ENCODE measurements at regions of chr11 and their contacts with region 1.

Region 1: GRCh38 chr11:14519917-14520746 is at the start of gene PSMA1:
- DNase-seq: peak; percentile 74 to 95 (median 90)
- ATAC-seq: peak; percentile 90
- H3K4me3 ChIP-seq: peak within 1 kb of the TSS; percentile 82 to 84
- H3K4me3 Mint-ChIP-seq: peak within 1 kb of the TSS; percentile 98
- H3K27ac ChIP-seq: peak within 1 kb of the TSS; percentile 82 to 87
- H3K27ac Mint-ChIP-seq: peak within 1 kb of the TSS; percentile 97
- H3K4me1 ChIP-seq: peaks cover 19% of the 10 kb centered on the region
- H3K4me1 Mint-ChIP-seq: peaks cover 32% of the 10 kb centered on the region
- H3K27me3 ChIP-seq: no peaks in the 10 kb centered on the region
- H3K27me3 Mint-ChIP-seq: no peaks in the 10 kb centered on the region
- CTCF ChIP-seq: no peak
- total RNA-seq, gene PSMA1: 177 to 193 TPM

Region 2: DNA sequence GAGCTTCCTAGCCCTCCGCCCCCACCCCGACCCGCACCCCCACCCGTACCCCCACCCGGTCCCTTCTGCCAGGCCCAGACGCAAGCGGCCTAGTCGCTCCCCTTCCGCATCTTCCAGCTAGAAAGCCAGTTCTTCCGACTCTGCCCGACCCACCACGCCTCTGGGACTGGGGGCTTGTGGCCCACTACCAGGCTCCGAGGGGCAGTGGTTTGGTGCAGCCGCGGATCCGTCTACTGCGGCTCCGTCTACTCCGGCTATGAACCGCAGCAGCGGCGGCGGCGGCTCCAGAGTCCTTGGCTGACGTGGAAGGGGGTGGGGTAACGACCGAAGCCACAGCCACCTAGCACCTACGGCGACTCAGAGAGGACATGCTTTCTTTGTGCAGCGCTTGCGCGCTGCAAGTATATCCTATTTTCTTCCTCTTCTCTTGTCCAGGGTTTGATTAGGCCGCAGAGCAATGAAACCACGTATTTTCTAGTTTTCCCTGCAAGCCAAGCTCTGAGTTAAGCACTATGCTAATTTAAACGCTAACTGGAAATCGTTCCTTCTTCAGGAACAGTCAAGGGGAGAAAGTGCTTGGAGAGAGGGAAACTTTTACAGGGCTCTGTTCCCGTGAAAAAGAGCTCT is 20.5 kb before region 1 on chr11 and contains the start of gene COPB1:
- CTCF ChIA-PET with region 1: interaction called, 4 read pairs
- POLR2A ChIA-PET with region 1: interaction called, 8 read pairs
- intact Hi-C with region 1: loop called (anchors 1 kb)
- DNase-seq: peak; percentile 84 to 96 (median 92)
- ATAC-seq: peak; percentile 94
- H3K4me3 ChIP-seq: peak within 1 kb of the TSS; percentile 74 to 75
- H3K4me3 Mint-ChIP-seq: peak within 1 kb of the TSS; percentile 99
- H3K27ac ChIP-seq: peak within 1 kb of the TSS; percentile 65 to 82
- H3K27ac Mint-ChIP-seq: peak within 1 kb of the TSS; percentile 100
- H3K4me1 ChIP-seq: peaks cover 30% of the 10 kb centered on the region
- H3K4me1 Mint-ChIP-seq: peaks cover 51% of the 10 kb centered on the region
- H3K27me3 ChIP-seq: no peaks in the 10 kb centered on the region
- H3K27me3 Mint-ChIP-seq: no peaks in the 10 kb centered on the region
- CTCF ChIP-seq: no peak
- total RNA-seq, gene COPB1: 108 to 114 TPM

Region 3: DNA sequence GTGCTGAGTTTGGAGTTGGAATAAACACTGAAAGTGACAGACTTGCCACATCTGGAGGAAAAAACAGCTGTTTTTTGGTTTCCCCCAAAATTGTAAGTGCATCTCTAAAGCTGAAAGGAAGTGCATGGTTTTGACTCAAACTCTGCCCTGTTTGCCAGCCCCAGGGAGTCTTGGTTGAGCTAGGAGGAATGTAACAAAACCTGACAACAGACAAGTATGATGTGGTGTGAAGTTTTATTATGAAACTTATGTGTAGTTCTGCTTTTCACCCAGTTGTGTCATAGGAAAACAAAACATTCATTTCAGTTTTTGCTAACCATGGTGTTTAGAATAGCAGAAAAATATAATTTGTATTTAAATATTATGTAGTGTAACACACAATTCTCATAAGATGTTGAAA is 91.8 kb after region 1 on chr11:
- CTCF ChIA-PET with region 1: no interaction called
- POLR2A ChIA-PET with region 1: no interaction called
- intact Hi-C with region 1: no loop called
- DNase-seq: no peak
- ATAC-seq: no peak
- H3K4me3 ChIP-seq: no peak overlapping the region
- H3K4me3 Mint-ChIP-seq: no peak overlapping the region
- H3K27ac ChIP-seq: peak overlapping the region; percentile 4 to 12
- H3K27ac Mint-ChIP-seq: peak overlapping the region; percentile 74
- H3K4me1 ChIP-seq: peaks cover 6% of the 10 kb centered on the region
- H3K4me1 Mint-ChIP-seq: peaks cover 53% of the 10 kb centered on the region
- H3K27me3 ChIP-seq: no peaks in the 10 kb centered on the region
- H3K27me3 Mint-ChIP-seq: no peaks in the 10 kb centered on the region
- CTCF ChIP-seq: no peak

Region 4: GRCh38 chr11:14773755-14774154 is 253.6 kb after region 1 on chr11:
- CTCF ChIA-PET with region 1: no interaction called
- POLR2A ChIA-PET with region 1: no interaction called
- intact Hi-C with region 1: loop called in 1 of 2 experiments (anchors 5 kb)
- DNase-seq: peak in 2 of 9 experiments; percentile 45 to 65
- ATAC-seq: no peak
- H3K4me3 ChIP-seq: no peak overlapping the region
- H3K4me3 Mint-ChIP-seq: peak overlapping the region; percentile 9
- H3K27ac ChIP-seq: no peak overlapping the region
- H3K27ac Mint-ChIP-seq: peak overlapping the region; percentile 49
- H3K4me1 ChIP-seq: peaks cover 63% of the 10 kb centered on the region
- H3K4me1 Mint-ChIP-seq: peaks cover 71% of the 10 kb centered on the region
- H3K27me3 ChIP-seq: no peaks in the 10 kb centered on the region
- H3K27me3 Mint-ChIP-seq: no peaks in the 10 kb centered on the region
- CTCF ChIP-seq: peak; percentile 48

Region 5: GRCh38 chr11:14892036-14892567 is 372.0 kb after region 1 on chr11 and contains the start of gene CYP2R1:
- CTCF ChIA-PET with region 1: no interaction called
- POLR2A ChIA-PET with region 1: interaction called, 6 read pairs
- intact Hi-C with region 1: loop called (anchors 1 kb)
- DNase-seq: peak; percentile 81 to 95 (median 89)
- ATAC-seq: peak; percentile 74
- H3K4me3 ChIP-seq: peak within 1 kb of the TSS; percentile 68 to 75
- H3K4me3 Mint-ChIP-seq: peak within 1 kb of the TSS; percentile 88
- H3K27ac ChIP-seq: peak within 1 kb of the TSS; percentile 49 to 79
- H3K27ac Mint-ChIP-seq: peak within 1 kb of the TSS; percentile 93
- H3K4me1 ChIP-seq: peaks cover 10% of the 10 kb centered on the region
- H3K4me1 Mint-ChIP-seq: peaks cover 42% of the 10 kb centered on the region
- H3K27me3 ChIP-seq: no peaks in the 10 kb centered on the region
- H3K27me3 Mint-ChIP-seq: no peaks in the 10 kb centered on the region
- CTCF ChIP-seq: no peak
- total RNA-seq, gene CYP2R1: 10.7 to 12.6 TPM

Region 6: GRCh38 chr11:15074206-15075161 is 554.4 kb after region 1 on chr11:
- CTCF ChIA-PET with region 1: no interaction called
- POLR2A ChIA-PET with region 1: no interaction called
- intact Hi-C with region 1: loop called in 1 of 2 experiments (anchors 10 kb)
- DNase-seq: peak; percentile 64 to 89 (median 80)
- ATAC-seq: peak; percentile 91
- H3K4me3 ChIP-seq: peak overlapping the region; percentile 39 to 60
- H3K4me3 Mint-ChIP-seq: peak overlapping the region; percentile 84
- H3K27ac ChIP-seq: no peak overlapping the region
- H3K27ac Mint-ChIP-seq: no peak overlapping the region
- H3K4me1 ChIP-seq: peaks cover 18% of the 10 kb centered on the region
- H3K4me1 Mint-ChIP-seq: peaks cover 12% of the 10 kb centered on the region
- H3K27me3 ChIP-seq: peaks cover 9 to 16% of the 10 kb centered on the region in 2 experiments
- H3K27me3 Mint-ChIP-seq: peaks cover 27% of the 10 kb centered on the region
- CTCF ChIP-seq: peak; percentile 79